Ovary (tissue), 10 donors: ENCODE measurements at regions of chr10 and their contacts with region 1.

Region 1: DNA sequence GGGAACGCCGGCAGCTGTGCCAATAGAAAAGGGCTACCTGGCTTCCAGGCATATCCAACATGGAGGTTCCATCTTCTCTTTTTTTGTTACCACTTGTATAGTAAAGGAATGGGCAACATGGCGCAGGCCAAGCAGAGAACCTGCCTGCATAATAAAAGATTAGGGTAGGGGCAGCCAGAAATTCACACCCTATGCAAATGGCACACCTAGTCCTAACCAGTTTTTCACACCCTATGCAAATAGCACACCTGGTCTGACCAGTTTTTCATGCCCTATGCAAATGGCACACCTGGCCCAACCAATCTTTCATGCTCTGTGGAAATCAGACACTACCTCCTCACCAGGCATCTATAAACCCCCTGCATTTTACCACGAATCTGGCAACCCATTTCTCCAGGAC is 369.5 kb downstream of the IPMK start:
- DNase-seq: no peak
- H3K4me3 ChIP-seq: no peak overlapping the region
- H3K27ac ChIP-seq: no peak overlapping the region
- H3K4me1 ChIP-seq: no peaks in the 10 kb centered on the region
- H3K27me3 ChIP-seq: no peaks in the 10 kb centered on the region
- CTCF ChIP-seq: no peak
- EP300 ChIP-seq: no peak
- POLR2A ChIP-seq: no peak

Region 2: GRCh38 chr10:57822965-57823364 is 75.3 kb before region 1 on chr10:
- intact Hi-C with region 1: no loop called
- DNase-seq: no peak
- H3K4me3 ChIP-seq: no peak overlapping the region
- H3K27ac ChIP-seq: no peak overlapping the region
- H3K4me1 ChIP-seq: no peaks in the 10 kb centered on the region
- H3K27me3 ChIP-seq: no peaks in the 10 kb centered on the region
- CTCF ChIP-seq: no peak
- EP300 ChIP-seq: no peak
- POLR2A ChIP-seq: no peak

Region 3: GRCh38 chr10:57846307-57847065 is 51.8 kb before region 1 on chr10:
- intact Hi-C with region 1: loop called in 1 of 4 experiments (anchors 1 kb)
- DNase-seq: no peak
- H3K4me3 ChIP-seq: no peak overlapping the region
- H3K27ac ChIP-seq: no peak overlapping the region
- H3K4me1 ChIP-seq: no peaks in the 10 kb centered on the region
- H3K27me3 ChIP-seq: no peaks in the 10 kb centered on the region
- CTCF ChIP-seq: no peak
- EP300 ChIP-seq: no peak
- POLR2A ChIP-seq: no peak

Region 4: DNA sequence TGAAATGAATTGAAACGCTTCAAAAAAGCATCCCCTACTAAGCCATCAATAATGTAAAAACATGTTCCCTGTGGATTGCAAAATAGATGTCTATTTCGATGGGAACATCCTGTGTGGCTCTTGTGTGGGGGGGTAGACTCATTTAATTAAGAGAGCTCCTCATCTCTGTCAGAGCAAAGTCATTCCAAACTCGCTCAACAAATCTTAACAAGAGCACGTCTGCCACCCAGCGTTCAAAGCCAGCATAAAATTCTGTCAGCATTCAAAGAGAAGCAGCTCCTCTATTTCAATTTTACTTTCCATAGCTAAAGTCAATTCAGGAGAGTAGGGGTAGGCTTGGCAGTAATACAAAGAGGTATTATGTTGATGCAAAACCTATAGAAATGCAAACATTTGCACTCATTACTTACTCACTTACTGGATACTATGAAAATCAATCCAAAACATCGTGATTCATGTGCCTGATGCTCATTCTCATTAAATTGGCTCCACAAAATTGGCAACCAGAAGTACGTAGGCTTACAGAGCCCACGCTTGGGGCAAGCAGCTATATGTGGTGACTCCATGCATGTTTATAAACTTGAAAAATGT is 254.5 kb after region 1 on chr10:
- intact Hi-C with region 1: no loop called
- DNase-seq: peak in 4 of 5 donors; percentile 10 to 38 (median 18)
- H3K4me3 ChIP-seq: no peak overlapping the region
- H3K27ac ChIP-seq: no peak overlapping the region
- H3K4me1 ChIP-seq: no peaks in the 10 kb centered on the region
- H3K27me3 ChIP-seq: no peaks in the 10 kb centered on the region
- CTCF ChIP-seq: peak in 1 of 3 donors; percentile 9
- EP300 ChIP-seq: no peak
- POLR2A ChIP-seq: no peak